ENCODE measurements at regions of chr6 and their contacts with region 1.

Region 1: DNA sequence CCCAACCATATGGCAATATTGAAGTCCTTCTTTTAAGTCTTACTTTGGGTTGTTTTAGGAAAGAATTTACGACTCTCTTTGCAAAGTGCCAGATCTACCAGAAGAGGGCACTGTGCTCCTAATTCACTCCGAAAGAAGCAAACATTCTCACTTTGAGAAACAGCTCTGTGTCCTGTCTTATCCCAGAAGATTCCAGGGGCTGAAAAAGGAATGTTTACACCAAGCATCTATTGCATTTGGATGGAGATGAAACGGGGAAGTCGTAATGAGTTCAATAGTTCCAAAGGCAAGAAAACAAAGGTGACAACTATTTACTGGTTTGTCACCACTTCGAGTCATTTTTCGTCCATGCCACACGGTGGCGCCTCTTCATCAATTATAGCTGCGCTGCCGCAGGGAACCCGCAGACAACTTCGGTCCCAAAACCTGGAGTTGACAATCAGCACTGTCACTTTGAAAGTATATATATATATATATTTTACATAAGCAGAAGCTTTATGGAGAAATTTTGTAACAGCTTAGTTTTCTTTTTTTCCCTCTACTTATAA is 121.6 kb downstream of the MOXD1 start:
- DNase-seq: peak; percentile 73
- ATAC-seq: peak; percentile 61
- H3K4me3 Mint-ChIP-seq: peak overlapping the region; percentile 80
- H3K27ac Mint-ChIP-seq: 0 out of 2 replicates have a peak overlapping the region, but pooled peaks have one; percentile 78
- H3K4me1 Mint-ChIP-seq: peaks cover 10% of the 10 kb centered on the region
- H3K27me3 Mint-ChIP-seq: peaks cover 9% of the 10 kb centered on the region
- CTCF ChIP-seq: peak; percentile 83

Region 2: DNA sequence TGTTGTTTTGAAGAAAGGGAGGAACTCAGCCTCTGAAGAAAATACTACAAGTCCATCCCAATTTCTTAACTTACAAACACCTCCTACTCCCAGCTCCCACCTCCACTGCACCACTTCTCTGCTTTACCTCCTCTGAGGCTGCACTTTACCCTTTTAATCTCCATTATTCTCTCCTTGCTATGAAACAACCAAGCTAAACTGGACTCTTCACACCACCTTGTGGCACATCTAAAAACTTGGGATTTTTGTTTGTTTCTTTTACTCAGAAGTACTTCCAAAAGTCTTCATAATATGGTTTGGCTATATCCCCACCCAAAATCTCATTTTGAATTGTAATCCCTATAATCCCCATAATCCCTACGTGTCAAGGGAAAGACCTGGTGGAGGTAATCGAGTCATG is 20.6 kb before region 1 on chr6:
- CTCF ChIA-PET with region 1: interaction called, 16 read pairs
- POLR2A ChIA-PET with region 1: no interaction called
- DNase-seq: no peak
- ATAC-seq: peak; percentile 85
- H3K4me3 Mint-ChIP-seq: no peak overlapping the region
- H3K27ac Mint-ChIP-seq: no peak overlapping the region
- H3K4me1 Mint-ChIP-seq: peaks cover 18% of the 10 kb centered on the region
- H3K27me3 Mint-ChIP-seq: peaks cover 19% of the 10 kb centered on the region
- CTCF ChIP-seq: no peak

Region 3: DNA sequence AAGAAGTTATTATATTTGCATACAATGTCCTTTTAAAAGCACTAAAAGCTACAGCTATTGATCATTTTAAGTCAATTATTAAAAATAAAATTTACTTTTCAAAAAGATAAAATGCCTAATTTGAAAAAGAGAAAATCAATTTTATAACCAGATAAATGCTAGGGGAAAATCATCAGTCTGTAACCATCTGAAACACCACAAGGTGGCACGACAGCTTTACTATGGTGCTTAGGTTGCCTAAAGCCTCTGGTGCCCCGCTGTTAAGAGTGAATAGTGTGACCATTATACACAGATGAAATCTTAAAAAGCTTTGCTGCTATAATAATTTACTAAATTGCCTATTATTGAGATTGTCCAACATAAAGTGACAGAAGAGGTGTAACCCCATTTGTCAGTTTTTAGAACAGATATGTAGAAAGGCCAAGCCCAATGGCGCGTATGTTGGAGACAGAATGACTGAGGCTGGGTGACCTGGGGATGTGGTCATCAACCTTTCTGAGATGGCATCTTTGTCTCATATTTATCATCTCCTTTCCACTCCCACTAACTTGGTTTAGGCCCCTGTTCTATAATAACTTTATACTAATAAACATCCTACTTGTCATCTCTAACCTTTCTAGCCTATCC is 20.8 kb after region 1 on chr6:
- CTCF ChIA-PET with region 1: interaction called, 77 read pairs
- POLR2A ChIA-PET with region 1: no interaction called
- DNase-seq: peak; percentile 41
- ATAC-seq: peak; percentile 92
- H3K4me3 Mint-ChIP-seq: no peak overlapping the region
- H3K27ac Mint-ChIP-seq: no peak overlapping the region
- H3K4me1 Mint-ChIP-seq: no peaks in the 10 kb centered on the region
- H3K27me3 Mint-ChIP-seq: no peaks in the 10 kb centered on the region
- CTCF ChIP-seq: peak; percentile 55

Region 4: GRCh38 chr6:132314432-132314831 is 34.8 kb after region 1 on chr6:
- CTCF ChIA-PET with region 1: no interaction called
- POLR2A ChIA-PET with region 1: no interaction called
- DNase-seq: no peak
- ATAC-seq: no peak
- H3K4me3 Mint-ChIP-seq: no peak overlapping the region
- H3K27ac Mint-ChIP-seq: no peak overlapping the region
- H3K4me1 Mint-ChIP-seq: no peaks in the 10 kb centered on the region
- H3K27me3 Mint-ChIP-seq: no peaks in the 10 kb centered on the region; the same call in 1 of the 2 replicates
- CTCF ChIP-seq: no peak

Region 5: GRCh38 chr6:132405143-132405915 is 125.7 kb after region 1 on chr6:
- CTCF ChIA-PET with region 1: interaction called, 15 read pairs
- POLR2A ChIA-PET with region 1: no interaction called
- DNase-seq: no peak
- ATAC-seq: no peak
- H3K4me3 Mint-ChIP-seq: no peak overlapping the region
- H3K27ac Mint-ChIP-seq: no peak overlapping the region
- H3K4me1 Mint-ChIP-seq: peaks cover 16% of the 10 kb centered on the region
- H3K27me3 Mint-ChIP-seq: peaks cover 37% of the 10 kb centered on the region
- CTCF ChIP-seq: no peak

Region 6: DNA sequence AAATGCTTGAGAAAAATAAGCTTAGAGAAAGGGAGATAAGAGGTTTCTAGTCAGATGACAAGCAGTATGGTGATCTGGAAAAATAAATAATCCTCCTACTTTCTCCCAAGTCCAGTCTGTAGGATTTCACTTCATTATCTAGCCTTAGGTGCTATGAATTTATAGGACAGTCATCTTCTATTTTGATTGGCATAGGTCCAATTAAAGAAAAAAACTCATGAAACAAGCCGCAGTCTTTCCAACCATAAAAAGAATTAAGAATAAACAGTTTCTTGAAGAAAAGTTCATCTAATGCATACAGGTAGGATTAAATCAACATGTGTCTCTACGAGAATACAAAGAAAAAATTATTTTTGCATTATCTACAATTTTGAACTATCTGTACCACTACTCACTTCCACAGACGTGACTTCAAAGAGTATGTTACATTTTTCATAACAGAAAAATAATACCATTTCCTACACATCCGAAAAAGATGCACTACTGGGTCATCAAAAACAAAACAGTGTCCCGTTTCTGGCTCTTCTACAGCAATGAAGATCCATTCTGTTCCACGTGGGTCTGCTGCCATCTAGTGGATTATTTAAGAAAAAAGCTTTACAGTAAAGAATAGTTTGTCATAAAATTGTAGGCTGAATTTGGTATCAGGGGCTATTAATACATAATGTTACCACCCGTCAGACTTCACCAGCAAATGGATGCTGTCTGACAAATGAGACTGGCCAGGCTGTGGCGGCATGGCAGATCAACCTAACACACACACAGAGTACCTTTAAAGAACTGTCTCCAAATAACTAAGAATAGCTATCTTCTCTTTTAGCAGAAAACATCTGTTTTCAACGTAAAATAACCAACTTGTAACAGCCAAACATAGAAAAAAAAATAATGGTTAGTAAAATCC is 204.4 kb after region 1 on chr6:
- CTCF ChIA-PET with region 1: interaction called, 32 read pairs
- POLR2A ChIA-PET with region 1: no interaction called
- DNase-seq: no peak
- ATAC-seq: peak; percentile 70
- H3K4me3 Mint-ChIP-seq: no peak overlapping the region
- H3K27ac Mint-ChIP-seq: no peak overlapping the region
- H3K4me1 Mint-ChIP-seq: no peaks in the 10 kb centered on the region
- H3K27me3 Mint-ChIP-seq: no peaks in the 10 kb centered on the region
- CTCF ChIP-seq: peak; percentile 63